Heart right ventricle (tissue), 16 donors: ENCODE measurements at regions of chr5 and their contacts with region 1.

Region 1: GRCh38 chr5:40834849-40835787 is at the start of gene RPL37:
- DNase-seq: peak; percentile 96 to 98
- ATAC-seq: peak; percentile 99 to 100 (median 99)
- H3K4me3 ChIP-seq: peak within 1 kb of the TSS; percentile 24 to 88 (median 74)
- H3K27ac ChIP-seq: peak within 1 kb of the TSS; percentile 93 to 99 (median 96)
- H3K4me1 ChIP-seq: peaks cover 2 to 38% (median 24%) of the 10 kb centered on the region in 9 donors
- H3K27me3 ChIP-seq: no peaks in the 10 kb centered on the region
- CTCF ChIP-seq: no peak
- total RNA-seq, gene RPL37: 530 to 829 (median 577) TPM

Region 2: GRCh38 chr5:40656766-40657165 is 178.4 kb before region 1 on chr5:
- intact Hi-C with region 1: no loop called
- DNase-seq: no peak
- ATAC-seq: no peak
- H3K4me3 ChIP-seq: no peak overlapping the region
- H3K27ac ChIP-seq: no peak overlapping the region
- H3K4me1 ChIP-seq: peaks cover 0 to 24% (median 0%) of the 10 kb centered on the region in 9 donors
- H3K27me3 ChIP-seq: no peaks in the 10 kb centered on the region
- CTCF ChIP-seq: no peak

Region 3: DNA sequence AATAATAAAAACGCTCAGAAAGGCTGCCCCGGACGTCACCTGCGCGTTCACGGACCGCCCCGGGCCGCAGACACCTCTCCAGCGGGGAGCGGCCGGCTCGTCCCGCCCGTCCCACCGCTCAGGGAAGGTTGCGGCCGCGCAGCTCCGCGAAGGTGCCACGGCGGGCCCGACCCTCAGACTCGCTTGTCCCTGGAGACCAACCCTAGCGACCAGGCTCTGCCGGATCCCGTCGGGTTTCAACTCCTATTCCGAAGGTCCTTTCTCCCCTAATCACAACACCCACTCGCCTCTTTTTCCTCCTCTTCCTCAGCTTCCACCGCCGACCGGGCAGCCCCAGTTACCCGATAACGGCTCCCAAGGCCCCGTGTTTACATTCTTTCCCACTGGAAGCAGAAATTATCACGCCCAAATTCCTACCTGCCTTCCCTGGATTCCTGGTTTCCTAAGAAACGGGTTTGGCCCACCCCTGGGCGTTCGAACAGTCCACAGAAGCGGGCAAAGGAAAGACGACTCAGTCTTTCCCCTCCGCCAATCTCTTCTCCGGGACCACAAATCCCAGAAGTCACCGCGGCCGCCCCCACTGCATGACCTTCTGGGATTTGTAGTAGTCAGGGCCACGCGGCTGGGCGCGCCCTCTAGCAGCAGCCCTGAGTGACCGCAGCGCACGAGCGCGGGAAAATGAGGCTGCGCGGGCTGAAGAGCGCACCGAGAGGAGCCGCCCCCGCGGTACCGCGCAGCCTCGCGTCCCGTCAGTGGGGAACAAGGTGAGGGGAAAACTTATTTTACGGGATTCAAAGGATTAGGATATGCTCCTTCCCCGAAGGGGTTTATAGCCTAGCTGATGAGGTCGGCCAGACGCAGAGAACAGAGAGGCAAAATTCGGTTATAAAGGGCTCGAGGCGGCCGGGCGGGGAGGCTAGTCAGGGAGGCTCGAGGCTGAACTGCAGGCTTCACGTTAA is 79.4 kb before region 1 on chr5 and contains the start of gene TTC33:
- intact Hi-C with region 1: loop called in 8 of 10 experiments (anchors 2 to 10 kb)
- DNase-seq: peak; percentile 94 to 96
- ATAC-seq: peak; percentile 98 to 99 (median 98)
- H3K4me3 ChIP-seq: peak within 1 kb of the TSS; percentile 65 to 98 (median 86)
- H3K27ac ChIP-seq: peak within 1 kb of the TSS; percentile 70 to 94 (median 89)
- H3K4me1 ChIP-seq: peaks cover 0 to 24% (median 17%) of the 10 kb centered on the region in 9 donors
- H3K27me3 ChIP-seq: no peaks in the 10 kb centered on the region
- CTCF ChIP-seq: peak; percentile 39 to 89 (median 72)
- total RNA-seq, gene TTC33: 12.9 to 20.1 (median 17.9) TPM